A673 (cell line): ENCODE measurements at regions of chr6 and their contacts with region 1.

Region 1: GRCh38 chr6:42068872-42069523 is 18.7 kb downstream of the TAF8 start:
- DNase-seq: no peak
- H3K4me3 ChIP-seq: no peak overlapping the region
- H3K27ac ChIP-seq: no peak overlapping the region
- H3K4me1 ChIP-seq: no peaks in the 10 kb centered on the region
- H3K27me3 ChIP-seq: no peaks in the 10 kb centered on the region
- CTCF ChIP-seq: no peak

Region 2: DNA sequence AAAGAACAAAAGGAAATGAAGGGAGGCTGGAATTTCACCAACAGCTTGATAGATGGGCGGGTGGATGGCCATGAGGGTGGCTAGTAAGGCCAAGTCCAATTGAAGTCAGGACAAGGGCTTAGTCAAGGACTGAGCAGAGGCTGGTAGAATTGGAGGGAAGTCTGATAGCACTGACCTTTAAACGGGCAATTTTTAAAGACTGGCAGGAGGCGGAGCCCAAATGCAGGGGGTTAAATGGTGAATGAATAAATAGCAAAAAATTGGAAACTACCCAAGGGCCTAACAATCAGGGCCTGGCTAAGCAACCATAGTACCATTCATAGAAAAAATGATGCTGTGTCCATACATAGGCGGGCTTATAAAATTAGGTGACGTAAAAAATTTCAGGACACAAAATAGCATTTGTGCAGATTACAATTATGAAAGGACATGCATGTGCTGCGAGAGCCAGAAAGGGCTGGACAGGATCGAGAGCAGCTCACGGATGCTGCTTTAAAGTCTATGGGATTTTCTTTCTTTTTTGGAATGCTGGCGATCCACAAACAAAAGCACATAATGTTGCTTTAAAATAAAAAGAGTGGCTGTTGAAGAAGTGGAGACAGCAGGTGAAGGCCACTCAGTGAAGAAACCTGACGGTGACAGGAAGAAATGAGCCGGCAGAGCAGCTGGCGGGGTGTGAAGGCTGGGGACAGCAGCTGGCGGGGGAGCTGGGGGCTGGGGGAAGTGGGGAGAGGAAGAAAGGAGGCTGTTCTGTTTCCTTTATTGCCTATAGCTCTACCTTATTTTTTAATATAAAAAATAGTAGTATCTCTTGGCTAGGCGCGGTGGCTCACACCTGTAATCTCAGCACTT is 61.5 kb before region 1 on chr6:
- CTCF ChIA-PET with region 1: interaction called, 14 read pairs
- POLR2A ChIA-PET with region 1: no interaction called
- intact Hi-C with region 1: no loop called
- DNase-seq: no peak
- H3K4me3 ChIP-seq: no peak overlapping the region
- H3K27ac ChIP-seq: no peak overlapping the region
- H3K4me1 ChIP-seq: no peaks in the 10 kb centered on the region
- H3K27me3 ChIP-seq: no peaks in the 10 kb centered on the region
- CTCF ChIP-seq: no peak

Region 3: DNA sequence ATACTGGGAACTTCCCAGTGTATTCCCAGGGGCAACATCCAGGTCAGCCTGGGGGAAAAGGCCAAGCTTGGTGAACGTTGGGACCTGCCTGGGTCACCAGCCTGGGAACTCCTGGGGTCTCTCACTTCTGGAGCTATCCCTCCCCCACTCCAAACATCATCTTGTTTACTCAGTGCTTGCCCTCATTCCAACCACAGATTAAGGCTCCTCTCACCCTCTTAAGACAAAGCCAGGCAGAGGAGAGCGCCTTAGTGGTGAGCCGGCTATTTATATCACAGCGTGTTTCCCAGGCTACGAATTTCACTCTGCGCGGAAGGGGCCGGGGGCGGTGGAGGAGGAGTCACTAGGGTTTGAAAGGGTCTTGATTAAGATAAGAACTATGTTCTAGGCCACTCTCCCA is 641.3 kb after region 1 on chr6:
- CTCF ChIA-PET with region 1: no interaction called
- POLR2A ChIA-PET with region 1: no interaction called
- intact Hi-C with region 1: no loop called
- DNase-seq: no peak
- H3K4me3 ChIP-seq: no peak overlapping the region
- H3K27ac ChIP-seq: no peak overlapping the region
- H3K4me1 ChIP-seq: no peaks in the 10 kb centered on the region
- H3K27me3 ChIP-seq: no peaks in the 10 kb centered on the region
- CTCF ChIP-seq: no peak